WTC11 (cell line): ENCODE measurements at regions of chr2 and their contacts with region 1.

Region 1: DNA sequence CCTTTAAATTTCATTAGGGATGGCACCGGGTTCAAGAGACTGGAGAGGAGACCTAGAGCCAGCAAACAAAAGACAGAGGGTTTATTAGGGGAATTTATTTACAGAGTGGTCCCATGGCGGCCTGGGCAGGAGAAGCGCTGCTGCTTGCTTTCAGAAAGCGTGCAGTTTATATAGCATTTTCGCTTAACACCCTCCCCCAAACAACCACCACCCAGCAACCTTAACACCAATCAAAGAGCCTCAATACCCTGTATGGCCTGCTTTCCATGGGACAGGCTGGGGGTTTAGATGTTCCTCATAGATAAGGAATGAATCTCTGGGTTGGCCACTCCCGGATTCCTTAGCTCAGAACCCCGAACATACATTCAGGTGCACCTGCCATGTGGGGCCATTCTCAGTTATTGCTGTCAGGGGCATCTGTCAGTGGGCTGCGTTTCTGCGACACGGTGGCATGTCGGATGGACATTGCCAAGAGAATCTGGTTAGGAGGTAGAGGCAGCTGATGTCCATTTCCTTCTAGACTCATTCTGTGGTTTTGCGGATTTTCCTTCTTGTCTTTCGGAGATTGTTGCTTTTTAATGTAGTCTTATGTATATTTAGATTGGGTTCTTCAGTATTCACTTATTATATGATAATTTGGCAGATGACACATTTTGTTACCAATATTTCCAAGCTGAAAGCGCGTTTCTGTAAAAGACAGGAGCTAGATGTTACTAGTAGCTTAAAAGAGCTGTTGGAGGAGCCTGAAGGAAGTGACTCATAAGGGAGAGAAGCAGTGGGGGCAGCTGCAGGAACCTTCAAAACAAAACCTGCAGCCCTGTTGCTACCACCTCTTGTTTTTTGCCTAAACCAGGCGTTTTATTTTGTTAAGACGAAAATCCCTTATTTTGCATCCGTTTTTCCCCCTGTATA is 7.2 kb downstream of the AGAP1 start:
- DNase-seq: no peak
- ATAC-seq: 0 out of 2 replicates have a peak, but pooled peaks have one; percentile 7
- H3K4me3 Mint-ChIP-seq: peak overlapping the region; percentile 48
- H3K27ac Mint-ChIP-seq: peak overlapping the region; percentile 94
- H3K4me1 Mint-ChIP-seq: peaks cover 85% of the 10 kb centered on the region
- H3K27me3 Mint-ChIP-seq: peaks cover 3% of the 10 kb centered on the region
- CTCF ChIP-seq: no peak

Region 2: DNA sequence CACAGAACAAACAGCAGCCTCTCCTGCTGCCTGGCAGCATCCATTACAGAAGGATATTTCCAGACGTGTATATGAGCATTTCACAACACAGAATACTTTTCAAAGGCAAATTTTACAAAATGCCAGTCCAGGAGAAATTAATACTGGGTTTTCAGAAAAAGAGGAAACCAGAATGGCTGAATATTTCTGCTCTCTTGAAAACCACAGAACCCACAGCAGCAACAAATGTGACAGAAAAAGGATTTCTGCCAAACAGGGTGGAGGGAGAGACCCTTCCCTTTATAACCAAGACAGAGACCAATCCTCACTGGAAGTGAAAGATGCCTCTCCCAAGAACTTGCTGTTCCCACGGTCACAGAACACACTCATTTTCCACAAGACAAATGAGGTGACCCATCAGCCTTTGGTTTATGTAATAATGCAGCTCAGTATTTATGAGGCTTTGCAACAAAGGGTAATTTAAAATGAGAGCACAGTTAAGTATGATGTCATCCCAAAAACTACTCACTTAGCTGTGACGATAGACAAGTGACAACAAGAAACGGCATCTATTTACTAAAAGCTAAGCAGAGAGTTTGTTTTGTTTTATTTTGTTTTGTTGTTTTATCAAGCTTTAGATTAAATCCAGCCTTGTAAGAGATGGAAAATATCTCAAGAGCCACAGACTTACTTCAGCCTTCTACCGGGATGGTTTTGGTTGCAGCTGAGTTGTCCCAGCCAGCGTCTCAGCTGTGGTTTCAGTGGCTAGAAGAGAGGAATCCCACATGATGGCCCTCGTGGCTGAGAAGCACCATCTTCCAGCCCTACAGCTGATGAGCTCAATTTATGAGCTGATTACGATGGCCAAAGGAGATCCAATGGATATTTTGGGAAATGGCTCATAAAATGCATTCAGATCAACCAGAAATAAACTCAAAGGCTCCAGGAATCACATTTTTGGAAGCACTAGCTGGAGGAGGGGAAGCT is 256.5 kb before region 1 on chr2:
- CTCF ChIA-PET with region 1: no interaction called
- POLR2A ChIA-PET with region 1: interaction called, 11 read pairs
- DNase-seq: no peak
- ATAC-seq: no peak
- H3K4me3 Mint-ChIP-seq: no peak overlapping the region
- H3K27ac Mint-ChIP-seq: no peak overlapping the region
- H3K4me1 Mint-ChIP-seq: no peaks in the 10 kb centered on the region
- H3K27me3 Mint-ChIP-seq: no peaks in the 10 kb centered on the region
- CTCF ChIP-seq: no peak

Region 3: GRCh38 chr2:235551965-235552364 is 50.9 kb after region 1 on chr2:
- CTCF ChIA-PET with region 1: interaction called, 23 read pairs
- POLR2A ChIA-PET with region 1: no interaction called
- DNase-seq: peak; percentile 66
- ATAC-seq: peak; percentile 88
- H3K4me3 Mint-ChIP-seq: no peak overlapping the region
- H3K27ac Mint-ChIP-seq: peak overlapping the region; percentile 87
- H3K4me1 Mint-ChIP-seq: peaks cover 52% of the 10 kb centered on the region
- H3K27me3 Mint-ChIP-seq: no peaks in the 10 kb centered on the region
- CTCF ChIP-seq: no peak

Region 4: GRCh38 chr2:235642446-235643098 is 141.6 kb after region 1 on chr2:
- CTCF ChIA-PET with region 1: no interaction called
- POLR2A ChIA-PET with region 1: no interaction called
- DNase-seq: no peak
- ATAC-seq: peak; percentile 21; the same call in 1 of the 2 replicates
- H3K4me3 Mint-ChIP-seq: no peak overlapping the region
- H3K27ac Mint-ChIP-seq: peak overlapping the region; percentile 73
- H3K4me1 Mint-ChIP-seq: peaks cover 62% of the 10 kb centered on the region
- H3K27me3 Mint-ChIP-seq: no peaks in the 10 kb centered on the region
- CTCF ChIP-seq: no peak